ENCODE measurements at regions of chr6 and their contacts with region 1.

Region 1: DNA sequence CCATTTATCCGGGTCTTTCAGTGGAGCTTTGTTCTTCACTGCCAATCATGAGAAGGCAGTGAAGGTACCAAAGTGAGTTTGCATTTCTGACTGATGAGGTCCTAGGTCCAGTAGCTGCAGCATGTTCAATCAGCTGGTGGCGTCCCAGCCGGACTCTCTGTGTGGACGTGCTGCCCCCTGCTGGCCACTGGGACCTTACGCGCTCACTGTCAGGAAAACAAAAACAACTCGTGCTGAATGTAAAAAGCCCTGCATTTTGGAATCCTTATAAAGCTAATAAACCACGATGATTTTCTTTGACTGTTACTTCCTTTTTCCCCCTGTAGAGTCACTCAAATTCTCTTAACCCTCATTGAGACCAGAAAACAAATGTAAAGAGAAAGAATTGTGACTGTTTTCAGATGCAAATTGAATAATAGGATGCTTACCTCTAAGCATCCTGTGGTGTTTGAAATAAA is 4.9 kb upstream of the CD24 start:
- DNase-seq: peak; percentile 76
- ATAC-seq: peak; percentile 78
- H3K4me3 ChIP-seq: no peak overlapping the region
- H3K27ac ChIP-seq: no peak overlapping the region
- H3K4me1 ChIP-seq: no peaks in the 10 kb centered on the region
- H3K27me3 ChIP-seq: peaks cover 11% of the 10 kb centered on the region
- CTCF ChIP-seq: peak; percentile 99

Region 2: GRCh38 chr6:106339334-106340029 is 640.0 kb before region 1 on chr6:
- CTCF ChIA-PET with region 1: no interaction called
- POLR2A ChIA-PET with region 1: no interaction called
- in situ Hi-C with region 1: no loop called
- intact Hi-C with region 1: loop called (anchors 10 kb)
- DNase-seq: peak; percentile 51
- ATAC-seq: peak; percentile 98
- H3K4me3 ChIP-seq: peak overlapping the region in 1 of 2 experiments; percentile 12; a peak in 1 of 4 replicates
- H3K27ac ChIP-seq: no peak overlapping the region
- H3K4me1 ChIP-seq: peaks cover 3% of the 10 kb centered on the region; the same call in 1 of the 2 replicates
- H3K27me3 ChIP-seq: no peaks in the 10 kb centered on the region; the same call in 1 of the 2 replicates
- CTCF ChIP-seq: peak; percentile 96

Region 3: DNA sequence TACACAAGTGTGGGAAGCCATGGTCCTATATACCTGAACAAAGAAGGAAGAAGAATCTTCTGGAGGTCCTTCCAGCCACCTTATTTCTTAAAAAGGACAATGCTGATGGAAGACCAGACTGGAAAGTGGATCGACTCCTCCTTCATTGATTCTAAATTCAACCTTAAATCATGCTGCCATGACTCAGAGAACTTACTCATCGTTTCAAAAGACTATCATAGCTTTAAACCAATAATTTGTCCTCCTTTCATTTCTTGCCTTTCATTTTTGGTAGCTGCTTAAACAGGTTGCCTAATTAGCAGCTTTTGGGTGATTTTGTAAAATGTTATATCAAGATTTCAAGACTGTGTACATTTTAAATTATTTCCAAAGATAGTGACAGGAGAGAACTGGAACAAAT is 410.9 kb before region 1 on chr6:
- CTCF ChIA-PET with region 1: interaction called, 6 read pairs
- POLR2A ChIA-PET with region 1: no interaction called
- in situ Hi-C with region 1: no loop called
- intact Hi-C with region 1: loop called (anchors 5 kb)
- DNase-seq: no peak
- ATAC-seq: no peak
- H3K4me3 ChIP-seq: no peak overlapping the region
- H3K27ac ChIP-seq: no peak overlapping the region
- H3K4me1 ChIP-seq: no peaks in the 10 kb centered on the region
- H3K27me3 ChIP-seq: no peaks in the 10 kb centered on the region
- CTCF ChIP-seq: no peak

Region 4: DNA sequence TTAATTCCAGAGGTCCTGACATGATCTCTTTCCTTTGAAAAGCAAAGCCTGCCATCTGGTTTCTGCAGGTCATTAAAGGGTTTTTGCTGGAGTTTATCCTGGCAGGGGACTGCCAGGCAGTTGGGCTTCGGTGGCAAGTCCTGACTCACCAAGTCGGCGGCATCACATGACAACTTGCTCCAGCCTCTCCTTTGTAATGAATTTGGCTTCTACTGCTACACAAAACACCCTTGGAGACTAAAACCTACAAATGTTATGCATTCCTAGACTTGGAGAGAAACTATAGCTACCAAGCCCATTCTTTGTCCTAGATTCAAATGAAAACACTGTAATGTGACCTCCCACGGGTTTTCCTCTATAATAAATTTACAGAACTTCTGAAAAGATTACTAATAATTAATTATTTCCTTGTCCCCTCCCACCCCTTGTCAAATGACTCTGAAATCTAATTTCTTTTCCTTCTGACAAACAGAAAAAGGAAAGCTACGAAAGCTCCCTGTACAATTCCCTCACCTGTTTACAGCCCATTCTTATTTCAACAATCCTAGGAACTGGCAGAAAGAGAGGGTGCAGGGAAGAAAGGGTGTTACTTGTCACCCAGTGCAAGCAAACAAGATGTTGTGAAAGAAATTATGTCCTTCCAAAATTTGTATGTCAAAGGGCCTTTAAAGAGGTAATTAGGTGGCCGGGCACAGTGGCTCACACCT is 287.2 kb before region 1 on chr6:
- CTCF ChIA-PET with region 1: no interaction called
- POLR2A ChIA-PET with region 1: no interaction called
- in situ Hi-C with region 1: no loop called
- intact Hi-C with region 1: loop called (anchors 10 kb)
- DNase-seq: no peak
- ATAC-seq: no peak
- H3K4me3 ChIP-seq: no peak overlapping the region
- H3K27ac ChIP-seq: no peak overlapping the region
- H3K4me1 ChIP-seq: 0 out of 2 replicates have a peak, but pooled peaks cover 8% of the 10 kb centered on the region
- H3K27me3 ChIP-seq: 0 out of 2 replicates have a peak, but pooled peaks cover 2% of the 10 kb centered on the region
- CTCF ChIP-seq: no peak

Region 5: DNA sequence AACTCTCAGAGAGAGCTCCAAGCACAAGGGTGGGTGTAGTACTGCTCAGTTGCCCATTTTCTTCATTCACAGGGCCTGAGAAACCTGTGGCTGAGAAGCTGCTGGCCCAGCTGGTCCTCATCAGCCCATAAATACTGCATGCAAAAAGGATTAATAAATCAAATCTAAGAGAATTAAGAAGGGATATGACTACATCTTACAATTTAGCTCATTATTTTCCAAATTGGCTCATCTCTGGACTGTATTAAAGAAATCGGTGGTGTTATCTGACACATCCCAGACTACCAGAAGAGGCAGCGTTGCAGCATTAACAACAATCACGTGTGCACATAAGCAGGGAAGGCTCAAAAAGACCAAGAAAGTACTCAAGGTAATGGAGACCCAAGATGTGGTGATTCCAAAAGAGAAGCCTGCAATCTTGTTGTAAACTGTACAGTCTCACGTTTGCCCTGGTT is 95.6 kb before region 1 on chr6:
- CTCF ChIA-PET with region 1: no interaction called
- POLR2A ChIA-PET with region 1: no interaction called
- in situ Hi-C with region 1: no loop called
- intact Hi-C with region 1: loop called (anchors 10 kb)
- DNase-seq: no peak
- ATAC-seq: peak; percentile 62; the same call in 1 of the 2 replicates
- H3K4me3 ChIP-seq: no peak overlapping the region
- H3K27ac ChIP-seq: no peak overlapping the region
- H3K4me1 ChIP-seq: no peaks in the 10 kb centered on the region
- H3K27me3 ChIP-seq: no peaks in the 10 kb centered on the region
- CTCF ChIP-seq: peak; percentile 64

Region 6: GRCh38 chr6:106966229-106966628 is 13.2 kb before region 1 on chr6:
- CTCF ChIA-PET with region 1: no interaction called
- POLR2A ChIA-PET with region 1: no interaction called
- in situ Hi-C with region 1: no loop called
- intact Hi-C with region 1: no loop called
- DNase-seq: no peak
- ATAC-seq: no peak
- H3K4me3 ChIP-seq: no peak overlapping the region
- H3K27ac ChIP-seq: no peak overlapping the region
- H3K4me1 ChIP-seq: no peaks in the 10 kb centered on the region
- H3K27me3 ChIP-seq: no peaks in the 10 kb centered on the region
- CTCF ChIP-seq: peak; percentile 32; the same call in 1 of the 2 replicates

Region 7: GRCh38 chr6:107264357-107264840 is 284.9 kb after region 1 on chr6:
- CTCF ChIA-PET with region 1: no interaction called
- POLR2A ChIA-PET with region 1: no interaction called
- in situ Hi-C with region 1: no loop called
- intact Hi-C with region 1: no loop called
- DNase-seq: no peak
- ATAC-seq: no peak
- H3K4me3 ChIP-seq: no peak overlapping the region
- H3K27ac ChIP-seq: no peak overlapping the region
- H3K4me1 ChIP-seq: no peaks in the 10 kb centered on the region
- H3K27me3 ChIP-seq: no peaks in the 10 kb centered on the region
- CTCF ChIP-seq: no peak

Measured in Panc1 (cell line).